HCT116 (cell line): ENCODE measurements at regions of chr17 and their contacts with region 1.

Region 1: DNA sequence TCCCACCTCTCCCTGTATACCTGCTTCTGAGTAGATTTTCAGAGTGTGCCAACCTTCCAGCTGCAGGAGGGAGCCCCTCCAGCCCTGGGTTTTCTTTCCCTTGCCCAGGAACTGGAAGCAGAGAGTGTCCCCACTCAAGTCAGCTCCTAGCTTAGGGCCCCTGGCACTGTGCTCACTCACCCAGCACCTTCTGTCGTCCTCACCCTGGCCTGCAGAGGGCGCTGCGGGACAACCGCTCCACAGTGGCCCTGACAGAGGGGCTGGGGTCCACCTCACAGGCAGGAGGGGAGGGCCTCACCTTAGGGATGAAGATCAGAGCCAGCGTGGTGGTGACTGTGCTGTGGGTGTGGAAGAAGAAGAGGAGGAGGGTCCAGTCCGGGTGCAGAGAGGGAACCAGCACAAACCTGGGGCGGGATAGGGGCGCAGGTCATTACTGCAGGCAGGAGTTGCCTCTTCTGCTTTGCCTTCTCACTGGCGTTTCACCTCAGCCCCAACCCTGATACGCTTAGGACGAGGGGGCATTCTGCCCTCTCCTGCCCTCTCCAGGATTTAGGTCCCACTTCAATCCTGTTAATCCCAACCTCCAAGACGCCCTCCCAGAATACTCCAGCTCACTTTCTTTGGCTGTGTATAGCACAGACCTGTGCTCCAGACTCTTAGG is 10.0 kb downstream of the GPR179 start:
- DNase-seq: no peak
- ATAC-seq: peak; percentile 90
- H3K4me3 ChIP-seq: no peak overlapping the region
- H3K27ac ChIP-seq: no peak overlapping the region
- H3K4me1 ChIP-seq: no peaks in the 10 kb centered on the region
- H3K27me3 ChIP-seq: no peaks in the 10 kb centered on the region
- CTCF ChIP-seq: peak; percentile 60 to 98 (median 93); a peak in 5 of 6 replicates
- POLR2A ChIP-seq: no peak
- RAD21 ChIP-seq: peak; percentile 74

Region 2: DNA sequence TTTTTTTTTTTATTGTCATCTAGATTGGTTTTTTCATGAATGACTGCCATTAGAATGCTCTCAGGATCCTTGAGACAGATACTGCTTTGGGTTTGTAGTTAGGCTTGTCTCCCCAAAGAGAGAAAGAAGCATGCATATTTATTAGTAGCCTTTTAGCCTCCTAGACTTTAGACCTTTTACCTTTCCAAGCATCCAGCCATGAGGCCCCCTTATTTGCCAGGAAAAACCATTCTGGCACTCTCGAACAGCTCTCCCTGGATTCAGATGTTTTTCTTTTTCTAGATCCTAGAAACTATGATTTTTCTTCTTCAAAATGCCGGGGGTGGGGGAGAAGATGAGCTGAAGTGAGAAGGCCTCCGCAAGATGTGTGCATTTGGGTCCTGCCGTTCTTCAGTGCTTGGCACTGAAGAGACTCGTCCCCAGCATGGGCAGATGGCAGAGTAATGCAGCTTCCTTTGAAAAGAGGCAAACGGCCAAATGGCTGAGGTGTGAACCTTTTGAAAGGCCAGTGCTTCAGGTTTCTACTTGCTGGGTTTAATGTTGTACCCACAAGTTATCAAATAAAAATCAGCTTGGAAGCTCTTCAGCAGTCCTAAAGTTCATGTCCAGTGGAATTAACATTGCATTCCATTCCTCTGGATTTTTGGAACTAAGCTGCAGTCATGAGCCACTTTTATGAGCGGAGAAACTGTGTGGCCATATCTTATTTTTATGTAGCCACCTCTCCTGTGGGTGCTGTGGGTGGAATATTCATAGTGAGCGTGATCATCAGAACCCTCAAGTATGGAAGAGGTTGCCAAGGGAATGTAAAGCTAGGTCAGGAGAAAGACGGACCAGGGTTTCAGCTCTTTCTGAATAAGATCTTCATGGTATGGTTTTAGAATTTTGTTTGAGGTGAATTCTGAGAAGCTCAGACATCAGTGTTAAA is 25.1 kb after region 1 on chr17:
- CTCF ChIA-PET with region 1: no interaction called
- POLR2A ChIA-PET with region 1: no interaction called
- RAD21 ChIA-PET with region 1: no interaction called
- intact Hi-C with region 1: no loop called
- DNase-seq: no peak
- ATAC-seq: no peak
- H3K4me3 ChIP-seq: no peak overlapping the region
- H3K27ac ChIP-seq: no peak overlapping the region
- H3K4me1 ChIP-seq: peaks cover 0 to 3% of the 10 kb centered on the region in 2 experiments; a peak in 1 of 4 replicates
- H3K27me3 ChIP-seq: no peaks in the 10 kb centered on the region
- CTCF ChIP-seq: no peak
- POLR2A ChIP-seq: no peak
- RAD21 ChIP-seq: no peak

Region 3: DNA sequence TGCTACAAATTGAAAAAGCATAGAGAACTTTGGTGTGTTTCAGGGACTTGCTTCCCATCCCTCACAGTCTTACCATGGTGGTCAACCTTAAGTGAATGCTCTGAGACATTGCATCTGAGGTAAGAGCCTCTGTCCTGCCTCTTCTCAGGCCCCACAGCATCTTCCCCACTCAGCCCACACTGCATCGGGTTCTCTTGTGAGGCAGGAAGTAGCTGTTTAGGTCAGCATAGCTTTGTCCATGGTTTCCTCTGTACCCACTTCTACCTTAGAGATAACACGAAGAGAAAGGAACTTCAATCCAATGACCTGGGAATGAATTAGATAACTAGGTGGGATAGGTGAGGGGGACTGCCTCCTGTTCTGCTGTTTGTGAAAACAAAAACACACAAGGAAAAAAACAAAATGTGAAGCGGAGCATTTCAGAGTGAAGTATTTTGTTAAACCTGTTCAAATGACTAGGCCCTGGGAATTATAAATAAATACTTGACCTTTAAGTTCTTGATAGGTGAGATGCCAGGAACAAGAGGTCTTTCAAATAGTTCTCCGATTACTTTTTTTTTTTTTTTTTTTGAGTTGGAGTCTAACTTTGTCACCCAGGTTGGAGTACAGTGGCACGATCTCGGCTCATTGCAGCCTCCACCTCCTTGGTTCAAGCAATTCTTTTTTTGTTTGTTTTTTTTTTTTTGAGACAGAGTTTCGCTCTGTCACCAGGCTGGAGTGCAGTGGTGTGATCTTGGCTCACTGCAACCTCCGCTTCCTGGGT is 35.5 kb after region 1 on chr17:
- CTCF ChIA-PET with region 1: no interaction called
- POLR2A ChIA-PET with region 1: no interaction called
- RAD21 ChIA-PET with region 1: no interaction called
- intact Hi-C with region 1: no loop called
- DNase-seq: no peak
- ATAC-seq: no peak
- H3K4me3 ChIP-seq: no peak overlapping the region
- H3K27ac ChIP-seq: no peak overlapping the region
- H3K4me1 ChIP-seq: no peaks in the 10 kb centered on the region
- H3K27me3 ChIP-seq: no peaks in the 10 kb centered on the region
- CTCF ChIP-seq: no peak
- POLR2A ChIP-seq: no peak
- RAD21 ChIP-seq: no peak

Region 4: DNA sequence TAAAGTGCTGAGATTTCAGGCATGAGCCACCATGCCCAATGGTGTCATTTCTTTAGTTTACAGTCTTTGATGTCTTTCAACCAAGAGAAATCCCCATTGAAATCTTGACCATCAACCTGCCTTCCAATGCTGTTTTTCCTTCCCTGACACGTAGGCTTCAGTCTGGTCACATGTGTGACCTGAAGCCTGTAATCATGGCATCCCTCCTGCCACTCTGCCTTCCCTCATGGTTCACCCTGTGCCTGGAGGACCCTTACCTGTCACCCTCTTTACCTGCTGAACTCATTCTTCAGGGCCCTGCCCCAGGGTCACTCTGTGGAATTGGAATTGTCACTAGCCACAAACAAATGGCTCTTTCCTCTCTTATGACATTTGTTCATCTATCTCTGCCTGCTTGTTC is 76.4 kb after region 1 on chr17:
- CTCF ChIA-PET with region 1: interaction called, 15 read pairs
- POLR2A ChIA-PET with region 1: no interaction called
- RAD21 ChIA-PET with region 1: interaction called, 3 to 4 read pairs
- intact Hi-C with region 1: loop called (anchors 5 kb)
- DNase-seq: no peak
- ATAC-seq: no peak
- H3K4me3 ChIP-seq: no peak overlapping the region
- H3K27ac ChIP-seq: no peak overlapping the region
- H3K4me1 ChIP-seq: peaks cover 4 to 8% of the 10 kb centered on the region in 2 experiments
- H3K27me3 ChIP-seq: no peaks in the 10 kb centered on the region
- CTCF ChIP-seq: no peak
- POLR2A ChIP-seq: no peak
- RAD21 ChIP-seq: no peak

Region 5: DNA sequence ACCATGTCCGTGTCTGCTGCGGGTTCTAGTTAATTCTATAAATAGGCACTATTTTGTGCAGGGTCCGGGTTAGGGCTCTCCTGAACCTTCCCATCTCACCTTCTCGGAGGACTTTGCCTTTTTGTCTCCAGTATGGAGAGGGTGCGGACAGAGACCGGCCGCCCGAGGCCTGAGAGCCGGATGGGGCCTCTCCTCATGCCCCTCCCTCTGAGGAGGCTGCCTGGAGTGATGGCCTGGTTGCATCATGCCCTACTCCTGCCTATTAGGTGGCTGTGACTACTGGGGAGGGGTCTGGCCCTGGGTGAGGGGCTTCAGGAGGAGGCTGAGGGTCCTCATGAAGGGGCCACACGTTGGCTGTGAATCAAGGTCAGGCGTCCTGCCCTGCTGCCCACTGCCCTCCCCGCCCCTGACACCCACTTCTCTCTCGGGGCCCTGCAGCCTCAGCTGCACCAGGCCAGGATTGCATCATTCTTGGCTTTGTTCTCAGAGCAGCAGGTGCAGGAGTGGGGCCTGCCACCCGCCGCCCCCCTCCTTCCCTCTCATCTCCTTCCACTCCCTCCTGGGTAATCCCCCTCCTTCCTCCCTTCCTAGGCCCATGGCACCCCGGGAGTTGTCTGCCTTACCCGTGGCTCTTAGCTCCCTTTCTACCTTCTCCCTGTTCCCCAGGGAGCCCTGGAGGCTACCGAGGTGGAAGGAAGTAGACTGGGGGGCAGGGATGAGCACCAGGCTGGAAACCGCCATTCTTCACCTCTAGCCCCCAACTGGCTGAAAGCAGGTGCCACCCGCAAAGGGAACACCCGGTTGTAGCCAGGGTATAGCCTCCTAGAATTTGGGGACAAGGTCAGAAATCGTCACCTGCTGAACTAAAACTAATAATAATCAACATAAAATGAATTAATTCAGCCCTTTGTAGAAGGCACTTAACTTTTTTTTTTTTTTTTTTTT is 81.8 kb after region 1 on chr17:
- CTCF ChIA-PET with region 1: interaction called, 15 read pairs
- POLR2A ChIA-PET with region 1: no interaction called
- RAD21 ChIA-PET with region 1: interaction called, 3 to 4 read pairs
- intact Hi-C with region 1: loop called (anchors 5 kb)
- DNase-seq: peak; percentile 23
- ATAC-seq: peak; percentile 46
- H3K4me3 ChIP-seq: peak overlapping the region in 1 of 2 experiments; percentile 26; a peak in 2 of 4 replicates
- H3K27ac ChIP-seq: peak overlapping the region; percentile 8; the same call in 1 of the 2 replicates
- H3K4me1 ChIP-seq: peaks cover 12 to 14% of the 10 kb centered on the region in 2 experiments
- H3K27me3 ChIP-seq: no peaks in the 10 kb centered on the region
- CTCF ChIP-seq: no peak
- POLR2A ChIP-seq: peak; percentile 47
- RAD21 ChIP-seq: no peak